ENCODE measurements at regions of chr9 and their contacts with region 1.

Region 1: DNA sequence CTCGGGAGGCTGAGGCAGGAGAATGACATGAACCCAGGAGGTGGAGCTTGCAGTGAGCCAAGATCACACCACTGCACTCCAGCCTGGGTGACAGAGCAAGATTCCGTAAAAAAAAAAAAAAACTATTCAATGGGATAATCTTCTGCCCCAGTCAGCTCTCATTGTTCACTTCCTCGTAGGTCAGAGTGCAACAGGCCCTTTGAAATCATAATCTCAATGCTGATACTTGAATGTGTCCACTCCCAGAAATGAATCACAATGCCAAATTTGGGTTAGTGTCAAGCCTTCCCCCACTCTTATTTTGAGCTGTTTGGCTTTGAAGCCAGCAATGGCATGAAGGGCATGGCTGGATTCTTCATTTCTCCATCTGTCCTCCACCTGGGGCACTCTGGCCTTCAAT is 610.3 kb upstream of the KLF4 start:
- DNase-seq: peak; percentile 64 to 96
- H3K4me3 ChIP-seq: no peak overlapping the region
- H3K27ac ChIP-seq: peak overlapping the region; percentile 89
- H3K4me1 ChIP-seq: peaks cover 30% of the 10 kb centered on the region
- H3K27me3 ChIP-seq: no peaks in the 10 kb centered on the region
- CTCF ChIP-seq: no peak

Region 2: DNA sequence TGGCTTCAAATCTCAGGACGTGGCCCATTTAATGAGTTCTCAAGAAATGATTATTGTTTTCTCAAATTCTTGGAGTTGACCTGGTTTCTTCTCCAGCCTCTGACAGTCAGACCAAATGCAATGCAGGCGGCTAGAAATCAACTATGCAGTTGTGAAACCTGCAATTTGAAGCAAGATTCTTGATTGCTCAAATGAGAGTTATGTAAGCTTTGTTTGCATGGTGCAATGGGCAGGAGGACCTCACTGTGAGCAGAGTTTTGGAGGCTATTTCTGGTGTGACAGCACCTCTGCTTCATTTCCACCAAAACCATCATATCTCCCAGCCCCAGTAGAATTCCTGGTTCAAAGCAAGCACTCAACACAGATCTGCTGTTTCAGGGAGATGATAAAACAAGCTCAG is 110.3 kb before region 1 on chr9:
- CTCF ChIA-PET with region 1: no interaction called
- POLR2A ChIA-PET with region 1: interaction called, 11 read pairs
- intact Hi-C with region 1: no loop called
- DNase-seq: peak in 1 of 2 experiments; percentile 61
- H3K4me3 ChIP-seq: no peak overlapping the region
- H3K27ac ChIP-seq: no peak overlapping the region
- H3K4me1 ChIP-seq: peaks cover 8% of the 10 kb centered on the region; the same call in 1 of the 2 replicates
- H3K27me3 ChIP-seq: no peaks in the 10 kb centered on the region
- CTCF ChIP-seq: no peak

Region 3: DNA sequence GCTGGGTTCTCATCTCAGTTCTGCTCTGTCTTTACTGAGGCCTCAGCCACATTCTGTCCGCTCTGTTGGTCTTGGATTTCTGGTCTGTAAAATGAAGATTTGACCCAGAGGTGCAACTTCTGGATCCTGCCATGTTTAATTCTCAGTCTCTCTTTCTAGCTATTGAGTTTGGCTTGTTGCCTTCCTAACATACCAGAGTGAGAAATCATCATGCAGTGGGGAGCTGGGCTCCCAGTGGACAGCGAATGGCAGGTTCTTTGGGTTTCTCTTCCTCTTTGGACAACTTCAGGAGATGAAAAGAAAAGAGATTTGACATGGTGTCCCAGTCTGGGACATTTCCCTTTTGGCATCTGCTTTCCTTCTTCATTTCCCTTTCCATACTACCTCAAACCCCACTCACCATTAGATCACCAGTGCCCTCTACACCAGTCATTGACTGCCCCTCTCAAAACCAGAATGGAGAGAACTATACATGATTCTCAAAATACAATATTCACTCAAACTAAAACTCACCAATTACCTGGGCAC is 421.3 kb after region 1 on chr9:
- CTCF ChIA-PET with region 1: no interaction called
- POLR2A ChIA-PET with region 1: no interaction called
- intact Hi-C with region 1: no loop called
- DNase-seq: peak in 1 of 2 experiments; percentile 51
- H3K4me3 ChIP-seq: no peak overlapping the region
- H3K27ac ChIP-seq: no peak overlapping the region
- H3K4me1 ChIP-seq: no peaks in the 10 kb centered on the region
- H3K27me3 ChIP-seq: no peaks in the 10 kb centered on the region
- CTCF ChIP-seq: no peak

Measured in PC-9 (cell line).